ENCODE measurements at regions of chr2 and their contacts with region 1.

Region 1: DNA sequence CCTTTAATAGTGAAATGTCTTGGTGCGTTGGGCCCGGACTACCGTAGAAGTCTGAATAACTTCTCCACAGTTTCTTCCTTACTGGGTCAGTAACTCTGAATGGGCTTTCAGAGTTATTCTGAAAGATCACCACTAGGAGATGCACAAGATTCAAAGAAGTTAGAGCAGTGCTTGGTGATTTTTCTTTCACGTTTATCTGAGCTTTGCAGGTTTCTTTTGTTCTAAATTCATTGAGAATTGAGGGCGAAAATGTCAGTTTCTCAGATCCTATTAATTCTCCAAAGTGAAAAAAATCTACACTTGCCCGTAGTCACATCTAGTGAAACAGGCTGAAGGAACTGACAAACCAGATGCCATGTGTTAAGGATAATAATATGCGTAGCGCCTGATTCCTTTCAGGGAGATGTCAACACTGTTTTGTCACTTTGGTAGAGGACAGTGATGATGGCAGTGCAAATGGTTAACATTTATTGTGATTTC is 70.1 kb downstream of the QPCT start:
- DNase-seq: peak; percentile 90

Region 2: GRCh38 chr2:37832590-37833197 is 418.2 kb after region 1 on chr2:
- in situ Hi-C with region 1: loop called (anchors 25 kb)
- DNase-seq: peak; percentile 96

Region 3: GRCh38 chr2:37973615-37974353 is 559.3 kb after region 1 on chr2:
- in situ Hi-C with region 1: no loop called
- DNase-seq: no peak